Activated B cell treated with CpG ODN at 0.5 μM for 24 hours (primary cell): ENCODE measurements at regions of chr14 and their contacts with region 1.

Region 1: DNA sequence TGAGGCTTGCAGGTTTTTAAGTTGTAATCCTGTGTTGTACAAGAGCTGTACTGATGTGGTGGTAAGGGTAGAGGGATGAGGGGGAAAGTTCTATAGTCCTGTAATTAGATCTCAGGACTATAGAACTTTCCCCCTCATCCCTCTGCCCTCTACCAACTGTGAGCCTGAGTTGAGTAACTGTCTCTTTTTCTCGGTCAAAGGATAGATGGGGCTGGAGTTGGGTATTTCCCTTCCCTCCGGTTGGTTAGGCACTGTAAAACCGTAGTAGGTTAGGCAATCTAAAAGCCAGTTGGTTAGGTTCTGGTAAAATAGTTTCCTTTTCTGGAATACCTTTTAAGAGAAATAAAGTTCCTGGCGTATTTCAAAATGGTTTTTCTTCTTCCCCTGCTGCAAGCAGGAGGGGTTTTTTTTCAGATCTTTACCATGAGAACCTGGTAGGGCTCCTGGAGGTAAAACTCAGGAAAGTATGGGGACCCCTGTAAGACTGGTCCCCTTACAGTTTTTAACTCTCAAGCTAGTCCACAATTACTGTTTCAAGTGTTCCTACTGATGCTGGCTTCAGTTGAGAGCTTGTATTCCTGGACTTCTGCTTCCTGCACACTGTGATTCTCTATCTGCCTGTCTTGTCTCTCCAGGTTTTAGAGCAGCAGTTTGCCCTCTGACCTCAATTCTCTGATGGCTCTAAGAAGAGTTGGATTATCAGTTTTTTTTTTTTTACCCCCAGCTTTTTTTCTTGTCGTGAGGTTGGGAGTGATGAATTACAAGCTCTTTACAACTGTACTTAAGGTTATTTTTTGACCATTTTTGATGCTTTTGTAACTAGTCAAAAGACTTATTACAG is 58.7 kb downstream of the FUT8 start:
- DNase-seq: no peak
- ATAC-seq: peak; percentile 96
- H3K4me3 Mint-ChIP-seq: peak overlapping the region; percentile 28
- H3K27ac Mint-ChIP-seq: peak overlapping the region; percentile 57
- H3K4me1 Mint-ChIP-seq: peaks cover 55% of the 10 kb centered on the region
- H3K27me3 Mint-ChIP-seq: no peaks in the 10 kb centered on the region
- CTCF ChIP-seq: no peak

Region 2: GRCh38 chr14:65434214-65434850 is 36.9 kb before region 1 on chr14:
- CTCF ChIA-PET with region 1: no interaction called
- POLR2A ChIA-PET with region 1: interaction called, 5 read pairs
- intact Hi-C with region 1: loop called (anchors 5 kb)
- DNase-seq: no peak
- ATAC-seq: no peak
- H3K4me3 Mint-ChIP-seq: peak overlapping the region; percentile 13
- H3K27ac Mint-ChIP-seq: peak overlapping the region; percentile 54
- H3K4me1 Mint-ChIP-seq: peaks cover 68% of the 10 kb centered on the region
- H3K27me3 Mint-ChIP-seq: no peaks in the 10 kb centered on the region
- CTCF ChIP-seq: no peak

Region 3: GRCh38 chr14:65972346-65972870 is 501.1 kb after region 1 on chr14:
- CTCF ChIA-PET with region 1: no interaction called
- POLR2A ChIA-PET with region 1: no interaction called
- intact Hi-C with region 1: no loop called
- DNase-seq: no peak
- ATAC-seq: no peak
- H3K4me3 Mint-ChIP-seq: no peak overlapping the region
- H3K27ac Mint-ChIP-seq: no peak overlapping the region
- H3K4me1 Mint-ChIP-seq: no peaks in the 10 kb centered on the region
- H3K27me3 Mint-ChIP-seq: peaks cover 10% of the 10 kb centered on the region
- CTCF ChIP-seq: no peak